GM23248 (cell line): ENCODE measurements at regions of chr12 and their contacts with region 1.

Region 1: DNA sequence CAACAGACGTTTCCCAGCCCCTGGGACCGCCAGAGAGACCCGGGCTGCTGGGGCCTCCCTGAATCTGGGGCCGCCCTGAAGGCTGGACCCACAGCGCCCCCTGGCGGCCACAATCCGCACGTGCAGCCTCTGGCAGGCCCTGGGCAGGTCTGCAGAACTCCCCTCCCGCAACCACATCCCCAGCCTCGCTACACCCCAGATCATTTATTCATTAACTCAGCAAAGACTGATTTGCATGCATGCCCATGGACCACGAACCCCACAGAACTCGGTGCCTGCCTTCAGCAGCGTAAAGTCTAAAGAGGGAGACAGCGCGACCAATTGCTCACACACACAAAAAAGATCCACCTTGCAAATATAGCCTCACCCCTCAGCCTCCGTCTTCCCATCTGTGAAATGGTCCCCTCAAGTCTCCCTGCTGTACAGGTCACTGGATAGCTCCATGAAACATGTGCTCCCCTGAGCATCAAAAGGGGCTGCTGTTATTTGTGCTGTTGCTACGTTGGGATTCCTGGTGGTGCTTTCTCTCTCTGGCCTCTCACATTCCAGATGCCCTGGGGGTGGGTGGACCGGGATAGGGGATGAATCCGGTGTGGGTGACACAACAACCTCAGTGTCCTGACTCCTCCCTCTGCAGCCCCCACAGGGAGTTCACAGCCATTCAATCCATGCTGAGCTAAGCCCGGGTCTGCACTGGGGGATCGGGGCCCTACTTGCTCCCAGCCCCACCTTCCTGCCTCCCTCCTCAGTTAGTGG is 96.4 kb downstream of the SCARB1 start:
- DNase-seq: peak; percentile 66
- H3K4me3 ChIP-seq: no peak overlapping the region
- H3K27ac ChIP-seq: no peak overlapping the region
- H3K4me1 ChIP-seq: peaks cover 15% of the 10 kb centered on the region
- H3K27me3 ChIP-seq: no peaks in the 10 kb centered on the region

Region 2: GRCh38 chr12:124044809-124045321 is 722.4 kb before region 1 on chr12:
- in situ Hi-C with region 1: loop called (anchors 10 kb)
- DNase-seq: no peak
- H3K4me3 ChIP-seq: no peak overlapping the region
- H3K27ac ChIP-seq: no peak overlapping the region
- H3K4me1 ChIP-seq: no peaks in the 10 kb centered on the region
- H3K27me3 ChIP-seq: no peaks in the 10 kb centered on the region

Region 3: DNA sequence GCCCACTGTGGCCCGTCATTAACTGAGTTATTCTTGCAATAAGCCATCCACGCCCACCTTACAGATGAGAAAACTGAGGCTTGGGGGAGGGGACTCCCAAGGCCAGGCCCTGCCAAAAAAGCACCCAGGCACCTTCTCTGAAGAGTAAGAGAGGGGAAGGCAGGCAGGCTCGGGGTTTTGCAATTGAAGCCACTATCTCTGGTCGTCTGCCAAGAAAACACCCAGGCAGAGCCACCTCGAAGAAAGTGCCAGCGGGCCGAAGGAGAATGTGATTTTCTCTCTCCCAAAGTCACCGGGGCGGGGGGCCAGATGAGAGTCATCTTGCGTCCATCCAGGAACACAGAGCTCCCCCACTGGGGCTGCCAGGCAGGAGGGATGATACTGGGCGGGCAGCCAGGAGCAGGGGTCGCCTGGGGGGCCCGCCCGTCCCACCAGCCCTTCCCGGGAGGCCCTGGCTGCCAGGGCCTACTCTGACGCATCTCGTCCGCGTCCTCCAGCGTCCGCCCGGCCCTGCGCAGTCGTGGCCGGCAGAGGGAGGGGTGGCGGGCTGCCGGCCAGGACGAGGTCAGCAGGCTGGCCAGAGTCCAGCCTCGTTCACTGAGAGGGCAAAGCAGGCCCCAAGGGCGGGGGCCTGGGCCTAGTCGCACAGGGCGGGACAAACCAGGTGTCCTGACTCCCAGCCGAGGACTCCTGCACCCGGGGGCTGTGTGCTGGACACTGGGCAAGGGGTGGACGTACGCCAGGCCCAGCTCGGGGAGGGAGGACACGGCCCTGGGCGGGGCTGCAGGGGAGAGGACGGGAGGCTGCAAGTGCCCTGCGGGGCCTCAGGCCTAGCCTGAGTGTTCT is 398.0 kb before region 1 on chr12:
- in situ Hi-C with region 1: loop called (anchors 10 kb)
- DNase-seq: peak; percentile 98
- H3K4me3 ChIP-seq: no peak overlapping the region
- H3K27ac ChIP-seq: peak overlapping the region; percentile 90
- H3K4me1 ChIP-seq: peaks cover 34% of the 10 kb centered on the region
- H3K27me3 ChIP-seq: no peaks in the 10 kb centered on the region

Region 4: GRCh38 chr12:124567661-124568373 is 199.4 kb before region 1 on chr12:
- in situ Hi-C with region 1: loop called (anchors 5 kb)
- DNase-seq: peak; percentile 95
- H3K4me3 ChIP-seq: peak overlapping the region; percentile 56
- H3K27ac ChIP-seq: peak overlapping the region; percentile 86
- H3K4me1 ChIP-seq: peaks cover 12% of the 10 kb centered on the region
- H3K27me3 ChIP-seq: no peaks in the 10 kb centered on the region

Region 5: GRCh38 chr12:125983093-125983783 is 1216.0 kb after region 1 on chr12:
- in situ Hi-C with region 1: no loop called
- DNase-seq: no peak
- H3K4me3 ChIP-seq: no peak overlapping the region
- H3K27ac ChIP-seq: no peak overlapping the region
- H3K4me1 ChIP-seq: no peaks in the 10 kb centered on the region
- H3K27me3 ChIP-seq: no peaks in the 10 kb centered on the region